ENCODE measurements at regions of chr3 and their contacts with region 1.

Region 1: GRCh38 chr3:192444096-192444790 is 283.1 kb downstream of the FGF12 start:
- DNase-seq: peak; percentile 78
- H3K4me3 ChIP-seq: no peak overlapping the region
- H3K27ac ChIP-seq: no peak overlapping the region
- H3K4me1 ChIP-seq: peaks cover 3% of the 10 kb centered on the region
- H3K27me3 ChIP-seq: peaks cover 15 to 35% of the 10 kb centered on the region in 2 experiments
- CTCF ChIP-seq: peak; percentile 96
- POLR2A ChIP-seq: no peak

Region 2: GRCh38 chr3:190811775-190812480 is 1632.3 kb before region 1 on chr3:
- CTCF ChIA-PET with region 1: interaction called, 13 read pairs
- POLR2A ChIA-PET with region 1: no interaction called
- dilution Hi-C with region 1: no loop called
- intact Hi-C with region 1: loop called (anchors 2 kb)
- DNase-seq: peak; percentile 33
- H3K4me3 ChIP-seq: no peak overlapping the region
- H3K27ac ChIP-seq: no peak overlapping the region
- H3K4me1 ChIP-seq: no peaks in the 10 kb centered on the region
- H3K27me3 ChIP-seq: no peaks in the 10 kb centered on the region
- CTCF ChIP-seq: peak; percentile 16 to 53
- POLR2A ChIP-seq: no peak

Region 3: DNA sequence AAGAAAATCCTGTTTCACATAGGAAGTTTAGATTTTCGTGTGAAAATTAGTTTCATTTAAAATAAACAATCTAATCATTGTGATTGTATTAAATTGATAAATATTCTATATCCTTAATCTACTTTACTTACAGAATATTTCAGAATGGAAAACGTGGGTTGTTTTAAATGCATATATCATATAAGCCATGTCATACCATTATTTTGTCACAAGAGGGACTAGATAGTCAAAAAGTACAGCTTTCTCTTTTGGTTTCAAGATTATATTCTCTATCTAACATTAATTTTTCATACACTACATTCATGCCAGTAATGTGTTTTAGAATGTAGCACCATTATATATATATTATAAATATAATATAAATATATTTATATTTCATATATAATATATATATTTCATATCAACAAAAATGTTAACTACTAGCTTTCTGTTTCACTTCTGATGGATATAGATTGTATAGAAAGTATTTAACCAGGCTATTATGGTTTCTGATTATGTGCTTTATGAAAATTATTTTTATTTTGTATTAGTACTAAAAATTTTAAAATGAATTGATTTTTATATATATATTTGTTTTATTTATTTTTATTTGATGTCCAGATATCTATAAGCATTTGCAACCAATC is 1199.9 kb before region 1 on chr3:
- CTCF ChIA-PET with region 1: interaction called, 18 read pairs
- POLR2A ChIA-PET with region 1: no interaction called
- dilution Hi-C with region 1: no loop called
- intact Hi-C with region 1: loop called (anchors 10 kb)
- DNase-seq: peak; percentile 39
- H3K4me3 ChIP-seq: no peak overlapping the region
- H3K27ac ChIP-seq: no peak overlapping the region
- H3K4me1 ChIP-seq: peaks cover 18% of the 10 kb centered on the region
- H3K27me3 ChIP-seq: no peaks in the 10 kb centered on the region
- CTCF ChIP-seq: peak; percentile 15 to 19
- POLR2A ChIP-seq: no peak

Region 4: GRCh38 chr3:191444569-191444968 is 999.7 kb before region 1 on chr3:
- CTCF ChIA-PET with region 1: interaction called, 10 read pairs
- POLR2A ChIA-PET with region 1: no interaction called
- dilution Hi-C with region 1: no loop called
- intact Hi-C with region 1: no loop called
- DNase-seq: no peak
- H3K4me3 ChIP-seq: no peak overlapping the region
- H3K27ac ChIP-seq: no peak overlapping the region
- H3K4me1 ChIP-seq: no peaks in the 10 kb centered on the region
- H3K27me3 ChIP-seq: no peaks in the 10 kb centered on the region
- CTCF ChIP-seq: no peak
- POLR2A ChIP-seq: no peak

Region 5: DNA sequence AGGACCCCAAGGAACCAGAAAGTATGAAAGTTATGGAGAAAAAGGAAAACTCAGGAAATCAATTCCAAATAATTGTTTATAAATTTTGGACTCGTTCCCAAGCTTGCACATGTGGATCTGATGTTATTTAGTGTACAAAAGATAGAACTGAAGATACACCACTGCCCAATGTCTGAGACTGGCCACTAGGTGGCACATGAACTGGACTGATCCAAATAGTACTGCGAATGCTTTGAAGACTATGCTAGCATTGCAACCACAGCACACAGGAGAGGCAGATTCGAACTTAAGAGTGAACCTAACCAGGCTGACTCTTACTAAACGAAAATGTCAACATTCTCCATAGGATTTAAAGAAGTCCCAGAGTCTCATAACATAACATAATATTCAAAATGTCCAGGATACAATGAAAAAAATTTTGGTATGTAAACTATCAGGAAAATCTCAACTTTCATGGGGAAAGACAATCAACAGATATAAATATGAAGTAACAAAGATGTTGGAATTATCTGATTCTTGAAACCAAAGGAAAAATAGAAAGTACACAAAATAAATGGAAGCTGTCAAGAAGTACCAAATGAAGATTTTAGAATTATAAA is 313.6 kb before region 1 on chr3:
- CTCF ChIA-PET with region 1: interaction called, 64 read pairs
- POLR2A ChIA-PET with region 1: no interaction called
- dilution Hi-C with region 1: no loop called
- intact Hi-C with region 1: loop called (anchors 1 kb)
- DNase-seq: peak; percentile 61
- H3K4me3 ChIP-seq: no peak overlapping the region
- H3K27ac ChIP-seq: no peak overlapping the region
- H3K4me1 ChIP-seq: no peaks in the 10 kb centered on the region
- H3K27me3 ChIP-seq: no peaks in the 10 kb centered on the region
- CTCF ChIP-seq: peak; percentile 72 to 78
- POLR2A ChIP-seq: no peak

Region 6: GRCh38 chr3:192194085-192194484 is 250.2 kb before region 1 on chr3:
- CTCF ChIA-PET with region 1: interaction called, 101 read pairs
- POLR2A ChIA-PET with region 1: no interaction called
- dilution Hi-C with region 1: no loop called
- intact Hi-C with region 1: no loop called
- DNase-seq: no peak
- H3K4me3 ChIP-seq: no peak overlapping the region
- H3K27ac ChIP-seq: no peak overlapping the region
- H3K4me1 ChIP-seq: no peaks in the 10 kb centered on the region
- H3K27me3 ChIP-seq: no peaks in the 10 kb centered on the region
- CTCF ChIP-seq: no peak
- POLR2A ChIP-seq: no peak

Region 7: DNA sequence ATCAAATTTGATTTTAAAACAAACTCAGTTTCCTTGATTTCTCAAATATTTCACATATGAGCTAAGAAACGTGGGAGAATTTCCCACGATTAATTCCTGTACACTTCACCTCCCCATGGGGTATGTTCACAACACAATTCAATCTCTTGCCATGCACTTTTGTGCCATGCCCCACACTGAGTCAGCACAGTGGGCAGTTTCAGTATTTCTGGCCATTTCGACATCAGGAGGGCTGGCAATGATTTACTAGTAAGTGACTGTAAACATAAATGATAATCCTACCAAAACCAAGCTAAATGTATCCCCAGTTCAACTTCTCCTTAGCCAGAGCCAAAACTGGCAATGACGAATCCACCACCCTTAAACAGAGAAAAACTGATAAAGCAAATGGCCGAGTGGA is 10.5 kb before region 1 on chr3:
- CTCF ChIA-PET with region 1: interaction called, 44 read pairs
- POLR2A ChIA-PET with region 1: no interaction called
- dilution Hi-C with region 1: no loop called
- intact Hi-C with region 1: no loop called
- DNase-seq: no peak
- H3K4me3 ChIP-seq: no peak overlapping the region
- H3K27ac ChIP-seq: no peak overlapping the region
- H3K4me1 ChIP-seq: no peaks in the 10 kb centered on the region
- H3K27me3 ChIP-seq: peaks cover 3 to 8% of the 10 kb centered on the region in 2 experiments
- CTCF ChIP-seq: no peak
- POLR2A ChIP-seq: no peak

Region 8: DNA sequence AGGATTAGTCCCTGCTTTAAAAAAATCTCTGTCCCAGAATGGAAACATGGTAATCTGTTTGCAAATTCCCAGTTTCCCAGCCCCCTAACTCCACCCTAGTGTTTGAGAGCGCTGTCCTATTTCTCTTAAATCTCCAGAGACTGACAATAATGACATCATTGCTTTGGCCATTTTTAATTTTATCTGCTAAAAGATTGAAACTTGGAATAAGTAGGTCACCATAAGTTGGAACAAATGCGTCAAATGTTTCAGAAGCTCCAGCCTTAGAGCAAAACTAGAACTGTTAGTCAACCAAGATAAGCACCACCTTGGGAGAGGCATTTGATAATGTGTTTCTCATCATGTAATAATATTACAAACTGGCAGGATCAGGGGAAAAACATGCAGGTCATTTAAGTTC is 499.1 kb after region 1 on chr3:
- CTCF ChIA-PET with region 1: no interaction called
- POLR2A ChIA-PET with region 1: no interaction called
- dilution Hi-C with region 1: no loop called
- intact Hi-C with region 1: no loop called
- DNase-seq: no peak
- H3K4me3 ChIP-seq: no peak overlapping the region
- H3K27ac ChIP-seq: no peak overlapping the region
- H3K4me1 ChIP-seq: no peaks in the 10 kb centered on the region
- H3K27me3 ChIP-seq: peaks cover 2 to 6% of the 10 kb centered on the region in 2 experiments
- CTCF ChIP-seq: no peak
- POLR2A ChIP-seq: no peak

Region 9: GRCh38 chr3:193743702-193744047 is 1299.4 kb after region 1 on chr3:
- CTCF ChIA-PET with region 1: no interaction called
- POLR2A ChIA-PET with region 1: no interaction called
- dilution Hi-C with region 1: no loop called
- intact Hi-C with region 1: no loop called
- DNase-seq: no peak
- H3K4me3 ChIP-seq: no peak overlapping the region
- H3K27ac ChIP-seq: no peak overlapping the region
- H3K4me1 ChIP-seq: no peaks in the 10 kb centered on the region
- H3K27me3 ChIP-seq: peaks cover 3 to 10% of the 10 kb centered on the region in 2 experiments
- CTCF ChIP-seq: no peak
- POLR2A ChIP-seq: no peak